ENCODE measurements at regions of chr12 and their contacts with region 1.

Region 1: DNA sequence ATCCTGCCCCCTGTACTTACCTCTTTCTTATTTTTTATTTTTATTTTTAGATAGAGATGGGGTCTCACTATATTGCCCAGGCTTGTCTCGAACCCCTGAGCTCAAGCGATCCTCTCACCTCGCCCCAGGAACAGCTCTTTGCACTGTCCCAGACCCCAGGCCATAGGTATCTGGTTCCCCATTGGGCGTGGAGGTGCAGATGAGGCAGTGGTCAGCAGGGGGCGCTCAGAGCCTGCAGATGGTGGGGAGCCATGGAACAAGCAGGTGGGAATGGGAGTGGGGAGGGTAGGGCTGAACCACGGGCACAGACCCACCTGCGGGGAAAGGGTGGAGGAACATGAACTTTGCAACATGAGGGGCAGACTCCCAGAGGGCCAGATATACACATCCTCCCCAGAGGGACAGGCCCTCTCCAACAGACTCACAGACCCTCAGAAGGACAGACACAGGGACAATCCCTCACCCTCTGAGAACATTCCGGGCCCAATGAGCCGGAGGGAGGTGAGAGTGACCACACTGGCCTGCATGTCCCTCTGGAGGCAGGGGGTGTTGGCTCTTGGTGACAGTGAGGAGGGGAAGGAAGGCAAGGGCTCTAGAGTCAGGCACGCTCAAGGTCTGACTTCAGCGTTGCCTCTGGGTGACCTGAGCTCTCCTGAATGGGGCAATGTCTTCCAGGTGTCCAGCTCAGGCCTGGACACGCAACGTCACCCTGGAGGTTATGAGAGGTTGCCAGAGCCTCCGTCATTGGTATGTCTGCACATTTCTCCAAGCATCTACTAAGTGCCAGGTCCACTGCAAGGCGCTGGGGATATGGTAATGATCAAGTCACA is 34.9 kb downstream of the KRT80 start:
- DNase-seq: peak; percentile 67 to 83
- ATAC-seq: peak; percentile 49 to 63 (median 61)
- H3K4me3 ChIP-seq: no peak overlapping the region
- H3K4me3 Mint-ChIP-seq: no peak overlapping the region
- H3K27ac ChIP-seq: no peak overlapping the region
- H3K27ac Mint-ChIP-seq: no peak overlapping the region
- H3K4me1 ChIP-seq: peaks cover 19% of the 10 kb centered on the region
- H3K4me1 Mint-ChIP-seq: peaks cover 8 to 10% of the 10 kb centered on the region in 2 donors
- H3K27me3 ChIP-seq: peaks cover 3% of the 10 kb centered on the region
- H3K27me3 Mint-ChIP-seq: peaks cover 0 to 5% of the 10 kb centered on the region in 2 donors
- CTCF ChIP-seq: peak; percentile 79

Region 2: DNA sequence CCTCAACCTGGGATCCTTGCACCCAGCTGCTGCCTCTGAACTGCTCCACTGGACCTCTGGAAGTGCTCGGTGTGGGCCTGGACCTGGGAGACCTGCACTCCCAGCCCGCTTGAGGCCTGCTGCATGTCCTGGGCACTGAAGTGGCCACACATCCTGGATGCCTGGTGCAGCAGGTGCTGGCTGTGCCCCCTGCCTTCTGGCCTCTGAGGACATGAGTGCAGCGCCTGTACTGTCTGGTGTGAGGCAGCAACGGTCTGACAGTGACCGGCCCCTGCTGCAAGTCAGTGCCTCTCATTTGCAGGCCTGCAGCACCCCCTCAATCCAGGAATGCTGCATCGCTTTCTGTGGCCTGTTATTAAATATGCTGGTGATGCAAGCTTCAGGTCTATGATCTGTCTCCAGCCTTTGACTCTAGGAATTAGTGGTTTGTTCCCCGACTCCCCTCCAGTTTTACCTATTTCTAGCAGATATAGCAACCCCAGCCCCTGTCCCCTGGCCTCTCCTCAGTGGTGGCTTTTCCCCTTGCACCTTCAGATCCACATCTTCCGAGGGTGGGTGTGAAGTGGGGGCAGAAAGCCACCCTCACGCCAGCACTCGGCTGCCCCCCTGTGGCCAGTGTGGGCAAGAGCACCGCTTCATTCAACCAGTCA is 73.8 kb before region 1 on chr12:
- intact Hi-C with region 1: no loop called
- DNase-seq: peak; percentile 66 to 84
- ATAC-seq: peak; percentile 76 to 97 (median 90)
- H3K4me3 ChIP-seq: no peak overlapping the region
- H3K4me3 Mint-ChIP-seq: no peak overlapping the region
- H3K27ac ChIP-seq: no peak overlapping the region
- H3K27ac Mint-ChIP-seq: no peak overlapping the region
- H3K4me1 ChIP-seq: peaks cover 22% of the 10 kb centered on the region
- H3K4me1 Mint-ChIP-seq: peaks cover 0 to 13% of the 10 kb centered on the region in 2 donors
- H3K27me3 ChIP-seq: no peaks in the 10 kb centered on the region
- H3K27me3 Mint-ChIP-seq: peaks cover 16 to 25% of the 10 kb centered on the region in 2 donors
- CTCF ChIP-seq: peak; percentile 95

Region 3: DNA sequence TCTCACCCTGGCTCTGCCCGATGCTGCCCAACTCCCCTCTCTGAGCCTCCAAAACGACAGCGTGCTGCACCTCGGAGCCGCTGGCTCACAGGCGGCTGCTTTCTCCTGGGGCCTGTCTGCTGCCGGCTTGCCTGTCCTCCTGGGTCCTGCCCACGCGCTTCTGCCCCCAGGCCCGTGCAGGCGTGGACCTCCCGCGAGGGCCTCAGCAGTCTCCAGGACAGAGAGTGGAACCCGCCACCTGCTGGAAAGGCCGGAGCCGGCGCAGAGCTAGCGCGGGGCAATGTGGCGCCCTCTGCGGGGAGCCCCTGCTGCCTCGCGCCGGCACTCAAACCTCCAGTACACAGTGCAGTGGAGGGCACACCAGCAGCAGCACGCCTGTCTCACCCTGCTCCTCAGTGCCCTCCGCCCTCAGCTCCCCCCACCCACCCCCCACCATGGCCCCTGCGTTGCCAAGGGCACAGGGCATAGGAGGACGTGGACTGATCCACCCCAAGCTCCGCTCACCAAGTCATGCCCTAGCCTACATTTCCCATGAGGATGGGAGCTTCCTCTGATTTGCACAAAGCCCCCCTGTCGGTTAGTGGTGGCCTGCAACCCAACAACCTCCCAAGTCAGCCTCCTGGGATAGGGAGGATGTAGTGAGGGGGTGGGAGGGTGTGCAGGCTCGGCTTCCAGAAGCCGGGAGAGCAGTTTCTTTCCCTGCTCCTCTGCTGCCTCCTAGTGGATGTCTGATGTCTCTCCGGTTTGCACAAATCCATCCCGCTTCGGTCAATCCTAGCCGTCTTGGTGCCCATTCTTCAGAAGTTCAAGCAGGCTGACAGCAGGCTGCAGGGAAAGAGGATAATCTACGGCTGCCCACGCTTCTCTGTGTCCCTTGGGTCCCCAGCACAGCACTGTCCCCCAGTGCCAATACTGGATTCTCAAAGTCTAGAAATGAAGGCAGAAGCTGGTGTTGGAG is 722.7 kb after region 1 on chr12:
- intact Hi-C with region 1: loop called (anchors 2 kb)
- DNase-seq: peak; percentile 77 to 85
- ATAC-seq: peak; percentile 95 to 98 (median 98)
- H3K4me3 ChIP-seq: no peak overlapping the region
- H3K4me3 Mint-ChIP-seq: peak overlapping the region; percentile 68
- H3K27ac ChIP-seq: no peak overlapping the region
- H3K27ac Mint-ChIP-seq: peak overlapping the region in 1 of 2 donors; percentile 37
- H3K4me1 ChIP-seq: peaks cover 22% of the 10 kb centered on the region
- H3K4me1 Mint-ChIP-seq: peaks cover 2 to 33% of the 10 kb centered on the region in 2 donors
- H3K27me3 ChIP-seq: peaks cover 3% of the 10 kb centered on the region
- H3K27me3 Mint-ChIP-seq: peaks cover 0 to 27% of the 10 kb centered on the region in 2 donors
- CTCF ChIP-seq: peak; percentile 99

Region 4: DNA sequence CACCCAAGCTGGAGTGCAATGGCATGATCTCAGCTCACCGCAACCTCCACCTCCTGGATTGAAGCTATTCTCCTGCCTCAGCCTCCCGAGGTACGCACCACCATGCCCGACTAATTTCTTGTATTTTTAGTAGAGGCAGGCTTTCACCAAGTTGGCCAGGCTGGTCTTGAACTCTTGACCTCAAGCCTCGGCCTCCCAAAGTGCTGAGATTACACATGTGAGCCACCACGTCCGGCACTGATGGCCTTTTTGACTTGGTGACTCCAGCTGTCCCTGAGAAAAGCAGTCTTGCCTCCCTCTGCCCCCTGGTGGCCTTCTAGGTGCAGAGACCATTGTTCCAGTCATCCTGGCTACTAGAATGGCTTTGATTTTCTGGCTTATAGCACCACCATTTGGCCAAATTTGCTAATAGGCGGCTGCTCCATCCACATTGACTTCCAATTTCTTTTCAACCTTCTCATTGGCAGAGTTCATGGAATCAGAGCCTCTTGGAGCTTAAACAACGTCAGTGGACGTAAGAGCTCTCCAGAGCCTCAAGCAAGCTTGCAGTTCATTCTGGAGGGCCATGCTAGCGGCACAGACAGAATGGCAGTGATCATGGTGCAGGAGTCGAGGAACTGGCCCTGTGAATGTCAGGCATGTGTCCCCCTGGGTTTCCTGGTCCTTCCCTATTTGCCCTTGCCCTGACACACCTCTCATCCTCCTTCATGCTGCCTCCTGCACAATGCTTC is 823.9 kb after region 1 on chr12:
- intact Hi-C with region 1: loop called (anchors 2 kb)
- DNase-seq: peak; percentile 65 to 92
- ATAC-seq: peak; percentile 94 to 99 (median 98)
- H3K4me3 ChIP-seq: no peak overlapping the region
- H3K4me3 Mint-ChIP-seq: no peak overlapping the region
- H3K27ac ChIP-seq: no peak overlapping the region
- H3K27ac Mint-ChIP-seq: no peak overlapping the region
- H3K4me1 ChIP-seq: peaks cover 4% of the 10 kb centered on the region
- H3K4me1 Mint-ChIP-seq: peaks cover 0 to 7% of the 10 kb centered on the region in 2 donors
- H3K27me3 ChIP-seq: peaks cover 5% of the 10 kb centered on the region
- H3K27me3 Mint-ChIP-seq: peaks cover 28 to 33% of the 10 kb centered on the region in 2 donors
- CTCF ChIP-seq: peak; percentile 98

Measured in natural killer cell (primary cell).